Activated CD4-positive, alpha-beta T cell treated with anti-CD3 and anti-CD28 coated beads for 36 hours (primary cell): ENCODE measurements at regions of chr22 and their contacts with region 1.

Region 1: GRCh38 chr22:32646476-32646875 is 155.0 kb upstream of the TIMP3 start:
- DNase-seq: peak; percentile 20
- ATAC-seq: peak; percentile 54
- H3K4me3 Mint-ChIP-seq: no peak overlapping the region
- H3K27ac Mint-ChIP-seq: peak overlapping the region; percentile 4
- H3K4me1 Mint-ChIP-seq: peaks cover 34% of the 10 kb centered on the region
- H3K27me3 Mint-ChIP-seq: no peaks in the 10 kb centered on the region

Region 2: GRCh38 chr22:32482708-32483107 is 163.8 kb before region 1 on chr22:
- CTCF ChIA-PET with region 1: no interaction called
- POLR2A ChIA-PET with region 1: no interaction called
- intact Hi-C with region 1: loop called in 1 of 2 experiments (anchors 2 kb)
- DNase-seq: peak; percentile 61
- ATAC-seq: peak; percentile 90
- H3K4me3 Mint-ChIP-seq: no peak overlapping the region
- H3K27ac Mint-ChIP-seq: no peak overlapping the region
- H3K4me1 Mint-ChIP-seq: peaks cover 25% of the 10 kb centered on the region
- H3K27me3 Mint-ChIP-seq: no peaks in the 10 kb centered on the region

Region 3: DNA sequence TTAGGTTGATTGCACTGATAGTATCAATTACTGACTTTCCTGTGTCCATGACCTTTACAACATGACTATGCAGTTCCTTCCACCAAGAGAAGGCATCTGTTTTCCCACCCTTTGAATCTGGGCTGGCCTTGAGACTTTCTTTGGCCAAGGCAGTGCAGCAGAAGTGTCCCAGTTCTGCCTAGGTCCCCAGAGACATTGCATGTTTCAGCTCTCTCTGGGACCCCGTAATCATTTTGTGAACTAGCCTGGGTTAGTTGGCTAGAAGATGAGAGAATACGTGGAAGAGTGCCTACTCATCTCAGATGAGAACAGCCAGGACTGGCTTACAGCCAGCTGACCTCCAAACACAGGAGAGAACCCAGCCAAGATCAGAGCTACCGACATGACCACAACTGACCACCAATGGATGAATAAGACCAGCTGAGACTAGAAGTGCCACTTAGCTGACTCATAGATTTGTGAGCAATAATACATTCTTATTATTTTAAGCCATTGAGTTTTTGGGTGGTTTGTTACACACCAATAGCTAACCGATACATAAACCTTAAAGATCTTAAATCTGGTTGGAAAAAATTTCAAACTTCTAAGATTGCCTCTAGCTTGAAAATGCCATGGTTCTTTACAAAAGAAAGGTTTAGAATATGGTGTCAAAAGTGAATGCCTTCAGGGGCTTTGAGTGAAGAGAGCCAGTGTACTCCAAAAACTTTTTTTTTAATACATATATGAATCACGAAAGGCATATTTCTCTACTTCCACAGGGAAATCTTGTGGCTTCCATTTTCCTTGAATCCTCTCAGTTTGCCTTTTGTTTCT is 26.7 kb before region 1 on chr22:
- CTCF ChIA-PET with region 1: no interaction called
- POLR2A ChIA-PET with region 1: no interaction called
- intact Hi-C with region 1: no loop called
- DNase-seq: no peak
- ATAC-seq: no peak
- H3K4me3 Mint-ChIP-seq: no peak overlapping the region
- H3K27ac Mint-ChIP-seq: no peak overlapping the region
- H3K4me1 Mint-ChIP-seq: no peaks in the 10 kb centered on the region
- H3K27me3 Mint-ChIP-seq: no peaks in the 10 kb centered on the region

Region 4: GRCh38 chr22:32631507-32632290 is 14.8 kb before region 1 on chr22:
- CTCF ChIA-PET with region 1: no interaction called
- POLR2A ChIA-PET with region 1: no interaction called
- intact Hi-C with region 1: loop called in 1 of 2 experiments (anchors 1 kb)
- DNase-seq: no peak
- ATAC-seq: peak; percentile 74
- H3K4me3 Mint-ChIP-seq: no peak overlapping the region
- H3K27ac Mint-ChIP-seq: peak overlapping the region; percentile 20
- H3K4me1 Mint-ChIP-seq: peaks cover 15% of the 10 kb centered on the region
- H3K27me3 Mint-ChIP-seq: peaks cover 5% of the 10 kb centered on the region